Mammary epithelial cell (primary cell): ENCODE measurements at regions of chr3 and their contacts with region 1.

Region 1: GRCh38 chr3:182389071-182389815 is 404.1 kb upstream of the ATP11B start:
- DNase-seq: peak; percentile 98
- H3K4me3 ChIP-seq: peak overlapping the region in 1 of 3 experiments; percentile 4
- H3K27ac ChIP-seq: peak overlapping the region; percentile 87
- H3K4me1 ChIP-seq: peaks cover 22% of the 10 kb centered on the region
- H3K27me3 ChIP-seq: no peaks in the 10 kb centered on the region
- CTCF ChIP-seq: no peak

Region 2: GRCh38 chr3:182364723-182365650 is 24.3 kb before region 1 on chr3:
- CTCF ChIA-PET with region 1: no interaction called
- dilution Hi-C with region 1: no loop called
- in situ Hi-C with region 1: no loop called
- intact Hi-C with region 1: loop called (anchors 1 kb)
- DNase-seq: peak; percentile 99
- H3K4me3 ChIP-seq: peak overlapping the region in 2 of 3 experiments; percentile 15 to 23
- H3K27ac ChIP-seq: peak overlapping the region; percentile 99
- H3K4me1 ChIP-seq: peaks cover 24% of the 10 kb centered on the region
- H3K27me3 ChIP-seq: no peaks in the 10 kb centered on the region
- CTCF ChIP-seq: no peak

Region 3: GRCh38 chr3:182370949-182371348 is 18.3 kb before region 1 on chr3:
- CTCF ChIA-PET with region 1: no interaction called
- dilution Hi-C with region 1: no loop called
- in situ Hi-C with region 1: no loop called
- intact Hi-C with region 1: loop called (anchors 1 kb)
- DNase-seq: peak; percentile 84
- H3K4me3 ChIP-seq: no peak overlapping the region
- H3K27ac ChIP-seq: peak overlapping the region; percentile 57
- H3K4me1 ChIP-seq: peaks cover 40% of the 10 kb centered on the region
- H3K27me3 ChIP-seq: no peaks in the 10 kb centered on the region
- CTCF ChIP-seq: no peak

Region 4: GRCh38 chr3:182490596-182491491 is 101.6 kb after region 1 on chr3:
- CTCF ChIA-PET with region 1: no interaction called
- dilution Hi-C with region 1: no loop called
- in situ Hi-C with region 1: no loop called
- intact Hi-C with region 1: loop called (anchors 1 kb)
- DNase-seq: peak; percentile 31
- H3K4me3 ChIP-seq: no peak overlapping the region
- H3K27ac ChIP-seq: no peak overlapping the region
- H3K4me1 ChIP-seq: no peaks in the 10 kb centered on the region
- H3K27me3 ChIP-seq: no peaks in the 10 kb centered on the region
- CTCF ChIP-seq: peak; percentile 52 to 63